ENCODE measurements at regions of chr16 and their contacts with region 1.

Region 1: DNA sequence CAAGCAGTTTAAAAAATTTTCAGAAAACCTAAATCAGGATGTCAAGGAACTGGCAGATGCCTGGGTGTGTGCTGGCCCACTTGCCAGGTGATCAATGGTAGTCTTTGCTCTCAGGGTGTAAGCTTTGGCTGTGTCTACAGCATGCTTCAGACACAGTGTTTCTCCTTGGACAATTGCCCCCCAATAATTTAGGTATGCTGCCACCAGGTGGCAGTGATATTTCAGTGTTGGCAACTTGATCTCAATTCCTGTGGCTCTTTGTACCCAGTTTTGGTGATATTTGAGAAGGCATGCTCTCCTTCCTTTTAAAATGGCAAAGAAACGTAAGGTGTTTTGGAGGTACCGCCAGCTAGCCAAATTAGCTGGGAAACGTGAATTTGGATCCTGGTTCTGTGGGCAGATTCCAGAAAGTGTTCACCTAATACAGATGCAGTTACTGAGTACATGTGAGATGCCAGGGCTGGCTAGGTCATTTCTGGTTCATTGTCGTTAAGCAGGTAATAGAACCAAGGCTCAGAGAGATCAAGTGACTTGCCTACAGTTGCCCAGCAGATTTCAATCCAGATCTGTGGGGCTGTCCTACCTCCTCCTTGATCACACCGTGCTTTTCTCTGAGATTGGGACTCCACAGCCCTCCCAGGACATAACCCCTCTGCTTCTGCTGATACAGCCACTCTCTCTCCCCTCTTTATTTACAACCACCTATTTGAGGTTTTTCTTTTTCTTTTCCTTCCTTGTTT is 155.6 kb upstream of the PLCG2 start:
- DNase-seq: no peak
- H3K4me3 ChIP-seq: no peak overlapping the region
- H3K27ac ChIP-seq: peak overlapping the region; percentile 50
- H3K4me1 ChIP-seq: peaks cover 66% of the 10 kb centered on the region
- H3K27me3 ChIP-seq: no peaks in the 10 kb centered on the region
- CTCF ChIP-seq: peak; percentile 29 to 54 (median 45)
- POLR2A ChIP-seq: no peak

Region 2: DNA sequence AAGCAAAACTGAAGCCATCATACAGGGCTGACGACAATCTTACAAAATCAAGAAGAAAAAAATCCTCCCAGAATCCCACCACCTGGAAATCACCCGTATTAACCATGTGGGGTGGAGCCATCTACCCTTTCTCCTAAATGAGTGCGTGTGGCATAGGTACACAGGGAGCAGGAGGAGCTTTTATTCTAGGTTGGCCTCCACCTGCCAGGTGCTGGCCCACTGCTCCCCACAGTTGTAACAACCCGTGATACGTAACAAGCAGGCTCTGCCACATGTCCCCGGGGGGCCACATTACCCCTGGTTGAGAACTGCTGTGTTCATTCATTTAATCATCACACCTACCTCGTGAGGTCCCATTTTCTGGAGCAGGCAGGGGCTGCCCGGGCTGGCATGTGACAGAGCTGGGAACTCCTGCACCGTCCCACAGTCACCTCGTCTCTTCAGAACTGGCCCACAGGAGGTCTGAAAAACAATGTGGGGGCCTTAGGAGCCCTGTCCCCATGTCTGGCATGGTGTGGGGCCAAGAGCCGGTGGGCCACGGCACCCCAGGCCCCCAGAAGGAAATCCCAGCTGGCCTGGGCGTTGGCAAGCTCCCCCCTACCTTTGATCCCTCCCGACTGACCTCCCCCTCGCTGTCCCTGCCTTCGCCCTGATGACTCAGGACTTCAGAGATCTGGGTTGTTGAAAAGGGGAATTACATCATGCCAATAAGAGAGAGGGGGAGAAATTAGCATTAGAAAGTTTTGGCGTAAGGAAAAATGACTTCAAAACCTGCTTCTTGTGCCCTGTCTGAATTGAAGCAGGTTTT is 166.0 kb before region 1 on chr16:
- intact Hi-C with region 1: no loop called
- DNase-seq: no peak
- H3K4me3 ChIP-seq: no peak overlapping the region
- H3K27ac ChIP-seq: peak overlapping the region; percentile 55
- H3K4me1 ChIP-seq: peaks cover 74% of the 10 kb centered on the region
- H3K27me3 ChIP-seq: no peaks in the 10 kb centered on the region
- CTCF ChIP-seq: no peak
- POLR2A ChIP-seq: no peak

Region 3: GRCh38 chr16:81539009-81539758 is 84.3 kb before region 1 on chr16:
- intact Hi-C with region 1: no loop called
- DNase-seq: no peak
- H3K4me3 ChIP-seq: no peak overlapping the region
- H3K27ac ChIP-seq: peak overlapping the region; percentile 46
- H3K4me1 ChIP-seq: peaks cover 47% of the 10 kb centered on the region
- H3K27me3 ChIP-seq: no peaks in the 10 kb centered on the region
- CTCF ChIP-seq: no peak
- POLR2A ChIP-seq: no peak

Region 4: DNA sequence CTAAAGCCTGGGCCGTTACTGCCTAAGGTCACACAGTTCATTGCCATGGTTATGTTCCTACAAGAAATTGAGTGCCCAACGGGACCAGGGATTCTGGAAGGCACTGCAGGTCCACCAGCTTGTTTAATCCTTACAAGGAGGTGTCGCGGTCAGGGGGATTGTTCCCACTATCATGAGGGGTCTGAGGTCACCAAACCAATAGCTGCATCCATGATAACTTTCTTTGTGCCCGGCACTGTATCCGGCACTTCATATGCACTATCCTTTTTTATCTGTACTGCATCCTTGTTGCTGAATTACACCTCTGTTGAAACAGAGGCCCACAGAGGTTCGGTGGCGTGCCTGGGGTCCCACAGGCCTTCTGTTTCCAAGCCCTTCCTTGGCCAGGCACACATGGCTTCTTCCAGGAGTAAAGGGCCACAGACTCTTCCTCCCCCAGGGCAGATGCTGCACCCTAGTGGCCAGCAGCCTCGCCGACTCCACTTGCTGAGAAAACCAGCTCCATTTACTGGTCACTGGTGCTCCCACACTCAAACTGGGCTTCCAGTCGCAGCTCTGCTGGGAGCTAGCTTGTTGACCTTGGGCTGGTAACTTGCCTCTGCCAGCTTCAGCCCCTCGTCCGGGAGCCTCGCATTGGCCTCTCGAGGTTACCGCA is 73.6 kb after region 1 on chr16:
- intact Hi-C with region 1: no loop called
- DNase-seq: no peak
- H3K4me3 ChIP-seq: no peak overlapping the region
- H3K27ac ChIP-seq: peak overlapping the region; percentile 28
- H3K4me1 ChIP-seq: peaks cover 46% of the 10 kb centered on the region
- H3K27me3 ChIP-seq: no peaks in the 10 kb centered on the region
- CTCF ChIP-seq: no peak
- POLR2A ChIP-seq: no peak

Region 5: GRCh38 chr16:81723098-81723723 is 99.7 kb after region 1 on chr16:
- intact Hi-C with region 1: loop called (anchors 10 kb)
- DNase-seq: peak in 1 of 2 donors; percentile 86
- H3K4me3 ChIP-seq: no peak overlapping the region
- H3K27ac ChIP-seq: no peak overlapping the region
- H3K4me1 ChIP-seq: peaks cover 20% of the 10 kb centered on the region
- H3K27me3 ChIP-seq: no peaks in the 10 kb centered on the region
- CTCF ChIP-seq: peak; percentile 47 to 91 (median 73)
- POLR2A ChIP-seq: no peak